Posterior vena cava (tissue), 2 donors: ENCODE measurements at regions of chr20 and their contacts with region 1.

Region 1: DNA sequence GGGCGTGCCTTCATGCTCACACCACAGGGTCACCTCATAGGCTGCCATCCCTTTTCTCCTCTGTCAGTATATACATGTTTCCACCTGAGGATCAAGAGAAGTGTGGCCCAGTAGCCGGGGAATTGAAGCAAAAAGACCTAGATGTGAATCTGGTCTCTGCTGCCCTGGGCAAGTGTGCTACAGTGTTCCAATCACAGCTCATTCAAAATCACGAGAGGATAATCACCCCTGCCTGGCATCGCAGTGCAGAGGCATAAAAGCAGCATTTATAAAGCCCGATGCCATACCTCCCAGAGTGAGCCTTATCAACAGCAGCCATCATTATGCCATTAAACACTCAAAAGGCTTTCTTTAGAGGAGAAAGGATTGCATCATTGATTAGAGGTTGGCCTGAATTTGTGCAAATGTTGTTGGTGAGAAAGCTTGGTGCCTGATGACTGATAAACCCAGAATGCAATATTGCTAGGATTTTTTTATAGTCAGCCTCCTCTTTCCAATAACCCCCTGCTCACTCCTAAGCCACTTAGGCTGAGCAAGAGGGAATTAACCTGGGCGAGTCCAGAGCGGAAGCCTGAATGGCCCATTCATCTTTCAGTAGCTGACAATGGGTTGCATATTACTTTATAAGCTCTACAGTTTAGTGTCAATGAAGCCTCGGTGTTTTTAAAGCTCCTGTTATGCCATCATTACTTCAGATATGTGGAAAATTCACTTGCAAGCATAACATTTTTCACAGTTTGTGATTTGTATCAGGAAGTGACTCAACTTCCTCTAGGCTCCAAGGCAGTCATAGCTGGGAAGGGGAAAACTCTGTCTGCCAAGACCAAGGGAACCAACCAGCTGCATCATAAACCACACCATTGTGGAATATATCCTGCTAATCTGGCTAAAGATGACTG is 92.5 kb upstream of the NXT1 start:
- DNase-seq: no peak

Region 2: GRCh38 chr20:23287354-23288190 is 29.5 kb after region 1 on chr20:
- intact Hi-C with region 1: loop called in 1 of 2 experiments (anchors 2 kb)
- DNase-seq: no peak

Region 3: DNA sequence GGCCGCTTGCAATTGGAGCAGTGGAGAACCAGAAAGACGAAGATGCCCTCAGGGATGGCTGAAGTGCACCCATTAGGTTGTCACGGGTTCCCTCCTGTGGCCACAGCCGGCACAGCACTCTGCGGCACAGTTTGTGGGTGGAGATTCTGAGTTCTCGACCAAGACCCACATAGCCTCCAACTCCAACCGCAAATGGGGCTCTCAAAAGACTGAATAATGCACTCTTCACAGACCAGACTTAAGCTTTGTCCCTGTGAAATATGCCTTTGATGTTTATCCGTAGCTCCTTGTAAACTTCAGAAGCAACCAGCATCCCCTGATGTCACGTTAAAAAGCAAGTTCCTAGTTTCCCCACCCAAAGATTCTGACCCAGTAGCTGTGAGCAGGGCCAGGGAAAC is 348.6 kb after region 1 on chr20:
- intact Hi-C with region 1: no loop called
- DNase-seq: peak; percentile 92